Activated CD4-positive, alpha-beta T cell treated with anti-CD3 and anti-CD28 coated beads for 36 hours (primary cell): ENCODE measurements at regions of chr12 and their contacts with region 1.

Region 1: GRCh38 chr12:8096281-8096915 is 14.3 kb downstream of the NECAP1 start:
- DNase-seq: no peak
- ATAC-seq: no peak
- H3K4me3 Mint-ChIP-seq: no peak overlapping the region
- H3K27ac Mint-ChIP-seq: no peak overlapping the region
- H3K4me1 Mint-ChIP-seq: peaks cover 10% of the 10 kb centered on the region
- H3K27me3 Mint-ChIP-seq: no peaks in the 10 kb centered on the region

Region 2: GRCh38 chr12:7844116-7844515 is 252.3 kb before region 1 on chr12:
- CTCF ChIA-PET with region 1: no interaction called
- POLR2A ChIA-PET with region 1: interaction called, 10 read pairs
- intact Hi-C with region 1: no loop called
- DNase-seq: no peak
- ATAC-seq: no peak
- H3K4me3 Mint-ChIP-seq: no peak overlapping the region
- H3K27ac Mint-ChIP-seq: no peak overlapping the region
- H3K4me1 Mint-ChIP-seq: peaks cover 13% of the 10 kb centered on the region
- H3K27me3 Mint-ChIP-seq: peaks cover 12% of the 10 kb centered on the region